ENCODE measurements at regions of chrX and their contacts with region 1.

Region 1: GRCh38 chrX:16123222-16123786 is at the start of gene GRPR:
- DNase-seq: peak; percentile 81
- ATAC-seq: peak; percentile 85
- total RNA-seq, gene GRPR: 0.13 TPM

Region 2: GRCh38 chrX:16087081-16087480 is 36.2 kb before region 1 on chrX:
- intact Hi-C with region 1: no loop called
- DNase-seq: no peak
- ATAC-seq: no peak

Region 3: DNA sequence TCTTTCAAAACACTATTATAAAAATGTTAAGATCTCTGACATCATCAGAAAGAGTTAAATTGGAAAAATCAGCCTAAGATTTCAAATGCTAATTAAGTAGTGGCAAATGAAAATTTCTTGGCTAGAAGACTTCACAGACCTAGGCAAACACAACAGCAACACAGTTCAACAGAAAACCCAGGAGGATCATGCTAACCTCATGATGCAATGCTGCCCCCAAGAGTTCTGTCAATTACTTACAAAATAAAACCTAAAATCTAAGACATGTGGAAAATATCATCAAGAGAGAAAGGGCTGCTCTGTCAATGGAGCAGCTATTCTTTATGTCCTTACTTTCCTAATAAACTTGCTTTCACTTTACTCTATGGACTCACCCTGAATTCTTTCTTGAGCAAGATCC is 547.7 kb after region 1 on chrX:
- intact Hi-C with region 1: loop called (anchors 10 kb)
- DNase-seq: no peak
- ATAC-seq: peak; percentile 49

Measured in Right ventricle myocardium superior (tissue), 1 donor.